CD14-positive monocyte (primary cell): ENCODE measurements at regions of chr4 and their contacts with region 1.

Region 1: DNA sequence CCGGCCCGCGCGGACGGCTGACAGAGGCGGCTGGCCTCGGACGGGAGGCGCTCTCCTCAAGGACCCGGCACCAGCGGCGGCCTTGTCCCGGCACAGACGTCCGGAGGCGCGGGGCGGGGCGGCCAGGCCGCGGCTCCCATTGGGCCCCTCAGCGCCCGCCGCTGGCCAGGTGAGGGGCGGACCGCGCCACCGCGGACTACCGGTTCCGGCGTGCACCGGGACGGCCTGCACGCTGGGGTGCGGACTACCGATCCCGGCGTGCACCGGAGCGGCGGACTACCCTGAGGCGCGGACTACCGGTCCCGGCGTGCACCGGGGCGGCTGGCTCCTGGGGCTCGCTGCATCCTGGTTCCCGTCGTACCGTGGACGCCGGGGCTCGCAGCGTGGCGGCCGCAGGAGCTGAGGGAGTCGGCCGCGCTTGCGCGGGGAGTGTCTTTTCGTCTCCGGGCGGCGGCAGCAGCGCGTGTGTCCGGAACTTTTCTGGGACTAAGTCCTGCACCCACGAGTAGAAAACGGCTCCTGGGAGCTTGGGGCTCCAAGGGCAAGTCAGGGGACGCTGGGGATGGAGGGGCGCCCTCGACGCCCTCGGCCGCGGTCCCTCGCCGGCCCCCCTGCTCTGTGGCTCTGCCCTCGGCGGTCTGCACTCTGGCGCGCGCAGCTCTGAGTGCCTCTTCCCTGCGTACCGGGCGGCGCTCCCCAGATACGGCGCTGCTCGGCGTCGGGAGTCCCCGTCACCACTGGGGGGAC is at the start of gene LETM1:
- DNase-seq: peak; percentile 78 to 89 (median 87)
- H3K4me3 ChIP-seq: peak within 1 kb of the TSS; percentile 72 to 89 (median 76)
- H3K4me3 Mint-ChIP-seq: peak within 1 kb of the TSS; percentile 82 to 85
- H3K27ac ChIP-seq: peak within 1 kb of the TSS; percentile 27 to 56
- H3K27ac Mint-ChIP-seq: peak within 1 kb of the TSS in 6 of 7 donors; percentile 15 to 69 (median 62)
- H3K4me1 ChIP-seq: peaks cover 21 to 29% of the 10 kb centered on the region in 2 donors
- H3K4me1 Mint-ChIP-seq: peaks cover 24% of the 10 kb centered on the region
- H3K27me3 ChIP-seq: no peaks in the 10 kb centered on the region
- H3K27me3 Mint-ChIP-seq: peaks cover 0 to 7% (median 6%) of the 10 kb centered on the region in 3 donors
- CTCF ChIP-seq: no peak
- polyA plus RNA-seq, gene LETM1: 6.2 to 18.6 (median 9.0) TPM

Region 2: GRCh38 chr4:1712216-1713002 is 143.8 kb before region 1 on chr4 and contains the start of gene SLBP:
- intact Hi-C with region 1: loop called in 1 of 2 experiments (anchors 5 kb)
- DNase-seq: peak; percentile 97 to 99 (median 98)
- H3K4me3 ChIP-seq: peak within 1 kb of the TSS; percentile 73 to 91 (median 88)
- H3K4me3 Mint-ChIP-seq: peak within 1 kb of the TSS; percentile 97 to 98
- H3K27ac ChIP-seq: peak within 1 kb of the TSS; percentile 68 to 92
- H3K27ac Mint-ChIP-seq: peak within 1 kb of the TSS; percentile 95 to 99 (median 97)
- H3K4me1 ChIP-seq: peaks cover 48 to 61% of the 10 kb centered on the region in 2 donors
- H3K4me1 Mint-ChIP-seq: peaks cover 59% of the 10 kb centered on the region
- H3K27me3 ChIP-seq: no peaks in the 10 kb centered on the region
- H3K27me3 Mint-ChIP-seq: no peaks in the 10 kb centered on the region
- CTCF ChIP-seq: no peak
- polyA plus RNA-seq, gene SLBP: 39.6 to 63.7 (median 59.1) TPM

Region 3: DNA sequence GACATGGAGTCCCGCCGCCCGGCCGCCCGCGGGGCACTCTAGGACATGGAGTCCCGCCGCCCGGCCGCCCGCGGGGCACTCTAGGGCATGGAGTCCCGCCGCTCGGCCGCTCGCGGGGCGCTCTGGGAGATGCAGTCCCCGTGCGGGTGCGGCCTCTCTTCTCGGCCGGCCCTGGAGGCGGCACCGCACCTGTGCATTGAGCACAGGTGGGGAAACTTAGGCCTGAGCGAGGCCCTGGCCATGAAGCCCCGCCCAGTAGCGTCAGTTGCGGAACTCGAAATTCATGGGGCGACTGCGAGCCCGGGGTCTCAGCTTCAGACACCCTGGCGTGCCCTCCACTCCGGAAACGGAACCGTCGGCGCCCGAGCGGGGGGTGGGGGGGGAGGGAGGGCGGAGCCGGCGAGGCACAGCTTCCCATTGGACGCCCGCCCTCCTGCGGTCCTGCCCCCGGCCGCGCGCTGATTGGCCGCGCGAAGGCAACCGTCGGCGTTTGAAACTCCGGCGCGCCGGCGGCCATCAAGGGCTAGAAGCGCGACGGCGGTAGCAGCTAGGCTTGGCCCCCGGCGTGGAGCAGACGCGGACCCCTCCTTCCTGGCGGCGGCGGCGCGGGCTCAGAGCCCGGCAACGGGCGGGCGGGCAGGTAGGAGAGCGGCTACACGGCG is 135.1 kb before region 1 on chr4 and contains the starts of genes TACC3 and TMEM129:
- intact Hi-C with region 1: loop called in 1 of 2 experiments (anchors 10 kb)
- DNase-seq: peak; percentile 88 to 91 (median 89)
- H3K4me3 ChIP-seq: peak within 1 kb of the TSS; percentile 51 to 80 (median 56)
- H3K4me3 Mint-ChIP-seq: peak within 1 kb of the TSS; percentile 85 to 98
- H3K27ac ChIP-seq: peak within 1 kb of the TSS; percentile 88 to 96
- H3K27ac Mint-ChIP-seq: peak within 1 kb of the TSS; percentile 97 to 100 (median 98)
- H3K4me1 ChIP-seq: peaks cover 59 to 75% of the 10 kb centered on the region in 2 donors
- H3K4me1 Mint-ChIP-seq: peaks cover 62% of the 10 kb centered on the region
- H3K27me3 ChIP-seq: no peaks in the 10 kb centered on the region
- H3K27me3 Mint-ChIP-seq: peaks cover 0 to 3% (median 0%) of the 10 kb centered on the region in 3 donors
- CTCF ChIP-seq: no peak
- polyA plus RNA-seq, gene TACC3: 43.7 to 84.2 (median 56.6) TPM
- polyA plus RNA-seq, gene TMEM129: 22.4 to 40.2 (median 24.1) TPM

Region 4: GRCh38 chr4:1870578-1871443 is 14.6 kb after region 1 on chr4 and contains the start of gene NSD2:
- intact Hi-C with region 1: loop called in 1 of 2 experiments (anchors 2 kb)
- DNase-seq: peak; percentile 83 to 91 (median 87)
- H3K4me3 ChIP-seq: peak within 1 kb of the TSS; percentile 59 to 87 (median 82)
- H3K4me3 Mint-ChIP-seq: peak within 1 kb of the TSS; percentile 87 to 90
- H3K27ac ChIP-seq: peak within 1 kb of the TSS; percentile 68 to 91
- H3K27ac Mint-ChIP-seq: peak within 1 kb of the TSS; percentile 67 to 93 (median 87)
- H3K4me1 ChIP-seq: peaks cover 19 to 30% of the 10 kb centered on the region in 2 donors
- H3K4me1 Mint-ChIP-seq: peaks cover 27% of the 10 kb centered on the region
- H3K27me3 ChIP-seq: no peaks in the 10 kb centered on the region
- H3K27me3 Mint-ChIP-seq: peaks cover 7 to 14% (median 7%) of the 10 kb centered on the region in 3 donors
- CTCF ChIP-seq: no peak
- polyA plus RNA-seq, gene NSD2: 1.9 to 8.7 (median 2.3) TPM

Region 5: DNA sequence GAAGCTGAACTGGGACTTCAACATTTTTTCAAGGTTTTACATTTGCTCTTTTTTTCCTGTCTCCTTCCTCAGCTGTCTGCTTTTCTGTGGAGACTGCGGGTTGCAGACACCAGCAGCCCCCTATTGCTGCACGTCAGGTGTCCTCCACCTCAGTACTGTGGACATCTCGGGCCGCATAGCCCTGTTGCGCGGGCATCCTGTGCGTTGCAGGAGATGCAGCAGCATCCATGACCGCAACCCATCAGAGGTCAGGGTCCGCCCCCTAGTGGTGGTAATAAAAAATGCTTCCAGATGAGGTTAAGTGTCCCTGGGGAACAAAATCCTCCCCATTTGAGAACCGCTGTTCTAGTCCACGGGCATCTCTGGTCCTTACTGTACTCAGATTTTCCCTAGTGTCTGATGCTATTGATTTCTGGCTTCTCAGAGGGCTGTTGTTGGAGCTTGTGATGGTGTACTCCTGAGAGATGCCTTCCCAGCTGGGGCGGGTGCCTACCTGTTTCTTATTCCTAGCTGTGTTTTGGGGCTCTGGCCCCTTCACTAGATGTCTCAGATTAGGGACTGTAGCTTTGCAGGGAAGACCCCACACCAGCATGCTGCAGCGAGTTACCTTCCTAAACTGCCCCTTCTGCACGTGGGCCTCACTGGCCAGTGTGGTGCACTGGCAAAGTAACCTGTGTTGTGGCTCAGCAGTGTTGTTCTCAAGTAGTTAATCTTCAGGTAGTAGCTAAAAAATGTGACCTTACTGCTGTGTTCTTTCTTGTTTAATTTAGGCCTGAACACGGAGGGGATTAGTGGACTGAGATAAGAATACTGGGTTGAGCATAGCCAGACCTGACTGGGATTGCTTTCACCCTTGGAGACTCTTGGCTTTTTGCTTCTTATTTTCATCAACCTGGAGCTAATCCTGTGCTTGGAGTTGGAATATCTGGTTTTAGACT is 43.2 kb after region 1 on chr4:
- intact Hi-C with region 1: loop called (anchors 5 to 10 kb)
- DNase-seq: peak; percentile 64 to 76 (median 75)
- H3K4me3 ChIP-seq: no peak overlapping the region
- H3K4me3 Mint-ChIP-seq: peak overlapping the region in 1 of 2 donors; percentile 59
- H3K27ac ChIP-seq: no peak overlapping the region
- H3K27ac Mint-ChIP-seq: peak overlapping the region in 2 of 7 donors; percentile 71 to 72
- H3K4me1 ChIP-seq: peaks cover 0 to 2% of the 10 kb centered on the region in 2 donors
- H3K4me1 Mint-ChIP-seq: peaks cover 4% of the 10 kb centered on the region
- H3K27me3 ChIP-seq: no peaks in the 10 kb centered on the region
- H3K27me3 Mint-ChIP-seq: no peaks in the 10 kb centered on the region
- CTCF ChIP-seq: peak; percentile 97